T-cell (primary cell): ENCODE measurements at regions of chr12 and their contacts with region 1.

Region 1: DNA sequence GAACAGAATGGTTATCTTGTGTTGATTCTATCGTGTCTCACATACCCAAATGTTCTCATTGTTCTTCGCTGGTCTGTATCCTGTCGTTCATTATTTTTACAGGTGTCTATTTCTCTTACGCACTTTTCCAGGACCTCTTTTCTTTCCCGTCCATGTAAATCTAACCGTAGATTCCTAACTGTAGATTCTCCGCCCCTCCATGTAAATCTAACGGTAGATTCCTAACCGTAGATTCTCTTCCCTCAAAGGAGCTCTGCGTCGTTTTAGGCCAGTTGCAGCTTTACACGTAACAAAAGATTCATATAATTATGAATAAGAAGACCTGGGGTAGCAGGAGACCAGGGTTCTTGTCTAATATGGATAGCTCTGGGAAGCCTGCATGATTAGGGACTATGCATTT is 9.7 kb upstream of the ZNF605 start:
- DNase-seq: no peak
- ATAC-seq: no peak
- H3K4me3 ChIP-seq: no peak overlapping the region
- H3K4me3 Mint-ChIP-seq: no peak overlapping the region
- H3K27ac ChIP-seq: no peak overlapping the region
- H3K27ac Mint-ChIP-seq: no peak overlapping the region
- H3K4me1 ChIP-seq: no peaks in the 10 kb centered on the region
- H3K4me1 Mint-ChIP-seq: no peaks in the 10 kb centered on the region
- H3K27me3 ChIP-seq: no peaks in the 10 kb centered on the region
- H3K27me3 Mint-ChIP-seq: no peaks in the 10 kb centered on the region

Region 2: GRCh38 chr12:131980260-131980659 is 985.5 kb before region 1 on chr12:
- CTCF ChIA-PET with region 1: no interaction called
- POLR2A ChIA-PET with region 1: interaction called in 1 of 2 experiments, 11 read pairs
- DNase-seq: no peak
- ATAC-seq: no peak
- H3K4me3 ChIP-seq: no peak overlapping the region
- H3K4me3 Mint-ChIP-seq: no peak overlapping the region
- H3K27ac ChIP-seq: no peak overlapping the region
- H3K27ac Mint-ChIP-seq: no peak overlapping the region
- H3K4me1 ChIP-seq: no peaks in the 10 kb centered on the region
- H3K4me1 Mint-ChIP-seq: peaks cover 13 to 26% (median 18%) of the 10 kb centered on the region in 3 donors
- H3K27me3 ChIP-seq: no peaks in the 10 kb centered on the region
- H3K27me3 Mint-ChIP-seq: no peaks in the 10 kb centered on the region

Region 3: GRCh38 chr12:132887513-132888351 is 78.1 kb before region 1 on chr12 and contains the start of gene CHFR:
- CTCF ChIA-PET with region 1: no interaction called
- POLR2A ChIA-PET with region 1: no interaction called
- DNase-seq: peak; percentile 82 to 97 (median 94)
- ATAC-seq: peak; percentile 97 to 99 (median 99)
- H3K4me3 ChIP-seq: peak within 1 kb of the TSS; percentile 72 to 81
- H3K4me3 Mint-ChIP-seq: peak within 1 kb of the TSS; percentile 98 to 99 (median 98)
- H3K27ac ChIP-seq: peak within 1 kb of the TSS; percentile 99
- H3K27ac Mint-ChIP-seq: peak within 1 kb of the TSS; percentile 100
- H3K4me1 ChIP-seq: peaks cover 4 to 18% of the 10 kb centered on the region in 2 experiments
- H3K4me1 Mint-ChIP-seq: peaks cover 25 to 37% (median 31%) of the 10 kb centered on the region in 3 donors
- H3K27me3 ChIP-seq: no peaks in the 10 kb centered on the region
- H3K27me3 Mint-ChIP-seq: no peaks in the 10 kb centered on the region
- total RNA-seq, gene CHFR: 84.2 to 107 (median 86.0) TPM